ENCODE measurements at regions of chrX and their contacts with region 1.

Region 1: DNA sequence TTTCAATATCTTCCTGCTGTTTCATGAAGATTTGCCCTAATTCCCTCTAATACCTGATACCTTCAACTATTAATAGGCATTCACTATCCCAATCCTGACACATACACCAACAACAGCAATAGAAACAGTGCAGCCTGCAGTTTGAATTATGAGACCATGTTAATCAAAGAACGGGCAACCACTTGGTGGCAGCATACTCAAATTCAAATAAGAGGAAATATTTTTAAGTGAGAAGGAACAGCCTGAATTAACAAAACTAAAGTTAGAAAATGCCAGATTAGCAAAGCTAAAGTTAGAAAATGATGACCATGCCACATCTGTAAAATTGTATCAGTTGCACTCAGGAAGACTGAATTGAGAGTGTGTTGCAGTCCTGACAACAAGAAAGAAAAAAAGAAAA is 204.9 kb downstream of the SMARCA1 start:
- DNase-seq: peak in 1 of 2 experiments; percentile 9
- H3K4me3 ChIP-seq: no peak overlapping the region
- H3K27ac ChIP-seq: no peak overlapping the region
- H3K4me1 ChIP-seq: no peaks in the 10 kb centered on the region
- H3K27me3 ChIP-seq: no peaks in the 10 kb centered on the region
- CTCF ChIP-seq: peak; percentile 70

Region 2: GRCh38 chrX:129360175-129360574 is 41.8 kb after region 1 on chrX:
- CTCF ChIA-PET with region 1: no interaction called
- POLR2A ChIA-PET with region 1: no interaction called
- intact Hi-C with region 1: loop called (anchors 2 kb)
- DNase-seq: peak; percentile 37 to 38
- H3K4me3 ChIP-seq: no peak overlapping the region
- H3K27ac ChIP-seq: no peak overlapping the region
- H3K4me1 ChIP-seq: no peaks in the 10 kb centered on the region
- H3K27me3 ChIP-seq: no peaks in the 10 kb centered on the region
- CTCF ChIP-seq: peak; percentile 81